ENCODE measurements at regions of chr17 and their contacts with region 1.

Region 1: GRCh38 chr17:7745748-7746470 is 28.4 kb downstream of the DNAH2 start:
- H3K4me3 ChIP-seq: no peak overlapping the region
- H3K27ac ChIP-seq: no peak overlapping the region
- H3K4me1 ChIP-seq: peaks cover 22% of the 10 kb centered on the region
- CTCF ChIP-seq: no peak

Region 2: GRCh38 chr17:7650509-7651096 is 95.3 kb before region 1 on chr17 and contains the start of gene ATP1B2:
- CTCF ChIA-PET with region 1: interaction called, 11 read pairs
- POLR2A ChIA-PET with region 1: no interaction called
- H3K4me3 ChIP-seq: peak within 1 kb of the TSS; percentile 38
- H3K27ac ChIP-seq: peak within 1 kb of the TSS; percentile 39; the same call in 1 of the 2 replicates
- H3K4me1 ChIP-seq: peaks cover 5% of the 10 kb centered on the region
- CTCF ChIP-seq: no peak

Region 3: GRCh38 chr17:7818746-7819645 is 73.1 kb after region 1 on chr17:
- CTCF ChIA-PET with region 1: interaction called, 40 read pairs
- POLR2A ChIA-PET with region 1: no interaction called
- H3K4me3 ChIP-seq: no peak overlapping the region
- H3K27ac ChIP-seq: no peak overlapping the region
- H3K4me1 ChIP-seq: no peaks in the 10 kb centered on the region
- CTCF ChIP-seq: no peak

Region 4: GRCh38 chr17:7844292-7845154 is 98.6 kb after region 1 on chr17:
- CTCF ChIA-PET with region 1: interaction called, 15 read pairs
- POLR2A ChIA-PET with region 1: interaction called, 9 read pairs
- H3K4me3 ChIP-seq: peak overlapping the region; percentile 70
- H3K27ac ChIP-seq: peak overlapping the region; percentile 96
- H3K4me1 ChIP-seq: peaks cover 16% of the 10 kb centered on the region
- CTCF ChIP-seq: 0 out of 2 replicates have a peak, but pooled peaks have one; percentile 49

Region 5: GRCh38 chr17:7897773-7898172 is 151.9 kb after region 1 on chr17:
- CTCF ChIA-PET with region 1: interaction called, 26 read pairs
- POLR2A ChIA-PET with region 1: no interaction called
- H3K4me3 ChIP-seq: no peak overlapping the region
- H3K27ac ChIP-seq: no peak overlapping the region
- H3K4me1 ChIP-seq: peaks cover under 1% of the 10 kb centered on the region; the same call in 1 of the 2 replicates
- CTCF ChIP-seq: peak; percentile 81

Region 6: GRCh38 chr17:7989781-7990655 is 244.1 kb after region 1 on chr17:
- CTCF ChIA-PET with region 1: interaction called, 89 read pairs
- POLR2A ChIA-PET with region 1: no interaction called
- H3K4me3 ChIP-seq: peak overlapping the region; percentile 59
- H3K27ac ChIP-seq: peak overlapping the region; percentile 29; the same call in 1 of the 2 replicates
- H3K4me1 ChIP-seq: no peaks in the 10 kb centered on the region
- CTCF ChIP-seq: peak; percentile 98